RWPE1 (cell line): ENCODE measurements at regions of chr13 and their contacts with region 1.

Region 1: DNA sequence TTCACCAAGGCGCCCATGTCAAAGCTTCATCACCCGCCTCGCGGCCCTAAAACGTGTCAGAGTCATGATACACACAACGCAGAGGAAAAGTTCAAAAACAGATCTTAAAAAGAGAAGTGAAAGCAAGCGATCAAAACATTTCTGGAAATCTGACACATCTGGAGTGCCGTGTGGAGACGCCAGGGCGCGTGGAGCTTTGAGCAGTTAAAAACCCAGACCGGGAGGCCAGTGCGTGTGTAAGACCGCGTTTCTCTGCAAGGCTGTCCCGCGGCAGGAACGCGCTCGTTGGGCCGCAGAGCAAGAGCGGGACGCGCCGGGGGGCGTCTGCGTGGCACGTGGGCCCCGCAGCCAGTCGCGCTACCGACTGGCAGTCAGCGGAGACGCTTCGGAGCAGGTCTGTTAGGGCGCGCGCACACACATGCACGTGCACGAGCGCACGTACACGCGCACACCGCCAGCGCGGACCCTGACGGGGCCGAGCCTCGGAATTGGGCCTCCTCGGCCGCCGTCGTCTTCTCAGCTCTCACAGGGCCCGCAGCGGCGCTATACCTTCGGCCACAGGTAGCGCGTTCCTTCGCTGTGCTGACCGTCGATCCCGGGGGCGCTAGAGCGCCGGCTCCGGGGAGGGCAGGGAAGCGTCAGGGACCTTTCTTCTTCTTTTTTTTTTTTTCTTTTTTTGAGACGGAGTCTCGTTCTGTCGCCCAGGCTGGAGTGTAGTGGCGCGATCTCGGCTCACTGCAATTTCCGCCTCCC is 35.8 kb downstream of the RNF6 start:
- DNase-seq: peak; percentile 78
- H3K27ac ChIP-seq: peak overlapping the region; percentile 81
- CTCF ChIP-seq: peak; percentile 83

Region 2: GRCh38 chr13:25943658-25944057 is 242.6 kb before region 1 on chr13:
- CTCF ChIA-PET with region 1: no interaction called
- POLR2A ChIA-PET with region 1: no interaction called
- DNase-seq: no peak
- H3K27ac ChIP-seq: no peak overlapping the region
- CTCF ChIP-seq: no peak

Region 3: DNA sequence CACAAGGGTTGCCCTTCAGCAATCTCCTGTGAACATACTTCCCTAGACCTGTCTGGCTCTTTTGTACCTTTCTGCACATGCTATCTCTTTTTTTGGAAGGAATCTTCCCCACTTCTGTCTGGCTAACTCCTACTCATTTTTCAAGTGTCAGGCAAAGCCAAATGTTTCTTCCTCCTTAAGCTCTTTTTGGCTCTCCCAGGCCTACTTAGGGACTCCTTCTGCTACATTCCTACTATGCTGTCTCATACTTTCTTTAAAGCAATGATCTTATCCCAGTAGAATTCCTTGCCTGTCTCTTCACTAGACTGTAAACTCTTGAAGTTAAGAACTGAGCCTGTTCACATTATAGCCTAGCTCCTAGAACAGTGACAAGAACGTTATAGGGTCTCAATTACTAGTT is 256.2 kb after region 1 on chr13:
- CTCF ChIA-PET with region 1: no interaction called
- POLR2A ChIA-PET with region 1: no interaction called
- DNase-seq: no peak
- H3K27ac ChIP-seq: no peak overlapping the region
- CTCF ChIP-seq: no peak

Region 4: DNA sequence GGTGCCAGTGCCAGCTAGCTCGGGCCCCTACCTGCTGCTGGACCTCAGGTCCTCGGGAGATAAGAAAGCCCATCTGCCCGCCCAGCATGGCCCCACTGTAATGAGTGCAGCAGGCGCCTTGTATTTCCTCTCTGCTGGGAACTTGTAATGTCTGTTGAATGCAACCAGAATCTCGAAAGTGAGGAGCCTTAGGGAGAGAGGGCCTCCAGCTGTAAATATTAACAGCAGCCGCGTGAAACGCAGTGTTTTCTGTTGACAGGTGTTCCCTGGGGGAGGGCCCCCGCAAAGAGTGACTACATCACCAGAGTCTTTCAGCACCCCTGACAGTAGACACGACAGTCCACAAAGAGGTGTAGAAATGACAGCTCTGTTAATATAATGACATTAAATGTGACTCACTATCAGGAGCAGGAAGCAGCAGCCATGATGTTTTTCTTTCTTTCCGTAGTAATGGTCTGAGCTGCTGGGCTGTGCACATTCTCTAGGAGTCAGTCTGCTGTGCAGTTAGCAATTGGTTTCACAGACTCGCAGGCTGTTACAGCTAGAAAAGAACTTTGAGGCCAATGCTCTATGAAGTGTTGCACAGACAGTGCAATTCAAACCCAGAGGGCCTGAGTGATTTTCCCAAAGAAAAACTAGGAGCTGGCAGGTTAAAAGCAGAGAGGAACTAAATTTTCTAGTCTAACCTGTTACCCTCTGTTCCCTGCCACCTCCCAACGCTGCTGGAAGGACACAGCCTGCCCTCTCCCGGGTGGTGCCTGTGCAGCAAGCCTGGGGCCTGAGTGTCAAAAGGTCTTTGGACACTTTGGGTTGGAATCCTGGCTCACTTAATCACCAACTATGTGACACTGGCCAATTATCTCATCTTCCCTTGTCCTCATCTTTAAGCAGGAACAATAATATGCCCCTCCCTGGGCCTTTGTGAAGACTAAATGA is 312.6 kb after region 1 on chr13:
- CTCF ChIA-PET with region 1: interaction called, 23 read pairs
- POLR2A ChIA-PET with region 1: no interaction called
- DNase-seq: no peak
- H3K27ac ChIP-seq: peak overlapping the region; percentile 50; the same call in 1 of the 2 replicates
- CTCF ChIP-seq: no peak

Region 5: DNA sequence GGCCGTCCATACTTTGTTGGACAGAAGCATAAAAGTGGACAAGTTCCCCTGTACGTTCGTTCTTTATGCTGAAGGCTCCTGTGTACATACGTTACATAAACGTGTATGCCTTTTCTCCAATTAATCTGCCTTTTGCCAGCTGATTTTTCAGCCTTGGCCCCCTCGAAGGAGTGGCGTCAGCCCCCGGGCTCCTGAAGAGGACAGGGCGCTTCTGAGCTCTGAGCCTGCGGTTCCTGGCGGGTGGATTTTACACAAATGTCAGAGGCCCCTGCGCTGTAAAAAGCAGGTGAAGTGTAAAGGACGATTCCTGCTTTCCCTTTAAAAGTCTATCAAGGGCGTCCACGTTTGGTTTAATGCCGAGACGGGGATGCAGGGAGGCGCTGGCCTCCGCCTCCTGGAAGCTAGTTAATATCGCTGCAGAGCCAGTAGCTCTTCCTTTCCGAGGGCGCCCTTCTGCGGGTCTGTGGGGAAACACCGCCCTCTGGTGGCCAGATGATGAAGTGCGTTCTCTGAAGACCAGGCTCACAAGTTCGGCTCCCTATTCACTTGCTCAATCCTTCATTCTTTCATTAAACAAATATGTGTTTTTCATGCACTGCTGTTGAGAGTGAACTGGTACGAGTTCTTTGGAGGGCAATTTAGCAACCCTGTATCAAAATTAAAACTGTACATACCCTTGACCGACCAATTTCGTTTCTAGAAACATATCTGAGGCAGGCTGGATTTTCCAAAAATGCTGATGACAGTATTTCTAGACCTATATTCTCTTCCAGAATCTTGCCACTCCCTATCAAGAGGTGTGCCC is 512.3 kb after region 1 on chr13:
- CTCF ChIA-PET with region 1: interaction called, 17 read pairs
- POLR2A ChIA-PET with region 1: no interaction called
- DNase-seq: peak; percentile 69
- H3K27ac ChIP-seq: no peak overlapping the region
- CTCF ChIP-seq: peak; percentile 90